ENCODE measurements at regions of chr9 and their contacts with region 1.

Region 1: GRCh38 chr9:113150670-113151611 is at the start of gene SLC31A2:
- DNase-seq: peak; percentile 68
- ATAC-seq: peak; percentile 97
- H3K4me3 ChIP-seq: peak within 1 kb of the TSS; percentile 80 to 83
- H3K27ac ChIP-seq: peak within 1 kb of the TSS; percentile 17; the same call in 1 of the 2 replicates
- H3K4me1 ChIP-seq: peaks cover 11 to 23% of the 10 kb centered on the region in 2 experiments; a peak in 3 of 4 replicates
- H3K27me3 ChIP-seq: peaks cover 6% of the 10 kb centered on the region; the same call in 1 of the 2 replicates
- CTCF ChIP-seq: peak; percentile 32 to 36 (median 35); a peak in 3 of 6 replicates
- POLR2A ChIP-seq: no peak
- RAD21 ChIP-seq: peak; percentile 26; the same call in 1 of the 2 replicates
- total RNA-seq, gene SLC31A2: 4.7 TPM

Region 2: GRCh38 chr9:113164536-113165300 is 13.8 kb after region 1 on chr9:
- CTCF ChIA-PET with region 1: no interaction called
- POLR2A ChIA-PET with region 1: no interaction called
- RAD21 ChIA-PET with region 1: no interaction called
- intact Hi-C with region 1: no loop called
- DNase-seq: no peak
- ATAC-seq: no peak
- H3K4me3 ChIP-seq: no peak overlapping the region
- H3K27ac ChIP-seq: no peak overlapping the region
- H3K4me1 ChIP-seq: no peaks in the 10 kb centered on the region
- H3K27me3 ChIP-seq: no peaks in the 10 kb centered on the region
- CTCF ChIP-seq: no peak
- POLR2A ChIP-seq: no peak
- RAD21 ChIP-seq: no peak

Region 3: DNA sequence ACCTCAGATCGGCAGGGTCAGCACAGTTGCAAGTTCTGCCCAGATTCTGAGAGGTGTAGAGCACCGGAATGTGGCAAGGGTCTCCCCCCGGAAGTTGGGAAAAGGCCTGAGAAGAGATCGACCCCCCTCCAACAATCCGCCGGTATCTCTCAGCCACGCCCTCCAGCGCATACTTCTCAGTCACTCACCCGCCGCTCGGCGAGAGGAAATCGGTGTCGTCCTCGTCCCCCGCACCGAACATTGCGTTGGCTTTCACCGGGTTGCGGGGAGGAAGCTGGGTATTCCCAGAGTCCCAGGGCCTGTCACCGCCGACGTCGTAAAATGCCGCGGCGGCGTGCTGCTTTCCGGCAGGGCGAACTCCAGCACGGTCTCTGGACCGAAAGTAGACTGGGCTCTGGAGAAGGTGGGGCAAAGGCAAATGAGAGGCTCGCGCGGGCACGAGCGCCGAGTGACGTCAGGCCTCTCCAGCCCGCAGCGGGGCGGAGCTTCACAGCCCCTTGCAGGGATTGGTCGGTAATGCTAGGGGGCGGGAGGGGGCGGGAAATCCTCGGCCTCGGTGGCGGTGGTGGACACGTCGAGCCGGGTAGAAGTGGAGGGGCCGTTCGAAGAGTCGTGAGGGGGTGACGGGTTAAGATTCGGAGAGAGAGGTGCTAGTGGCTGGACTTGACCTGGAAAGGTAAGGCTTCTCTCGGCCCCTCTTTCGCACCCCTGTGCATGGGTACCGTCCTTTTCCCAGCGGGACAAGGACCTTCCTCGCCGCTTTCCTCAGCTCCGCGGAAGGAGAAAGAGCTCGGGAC is 70.3 kb after region 1 on chr9 and contains the starts of genes FKBP15 and SLC31A1:
- CTCF ChIA-PET with region 1: no interaction called
- POLR2A ChIA-PET with region 1: no interaction called
- RAD21 ChIA-PET with region 1: no interaction called
- intact Hi-C with region 1: loop called (anchors 5 kb)
- DNase-seq: peak; percentile 97
- ATAC-seq: peak; percentile 99
- H3K4me3 ChIP-seq: peak within 1 kb of the TSS; percentile 81 to 84
- H3K27ac ChIP-seq: peak within 1 kb of the TSS; percentile 65
- H3K4me1 ChIP-seq: peaks cover 2 to 21% of the 10 kb centered on the region in 2 experiments; a peak in 3 of 4 replicates
- H3K27me3 ChIP-seq: no peaks in the 10 kb centered on the region
- CTCF ChIP-seq: no peak
- POLR2A ChIP-seq: peak; percentile 36
- RAD21 ChIP-seq: no peak
- total RNA-seq, gene FKBP15: 13.8 TPM
- total RNA-seq, gene SLC31A1: 24.4 TPM